IMR-90 (cell line): ENCODE measurements at regions of chr22 and their contacts with region 1.

Region 1: GRCh38 chr22:18070556-18071306 is 7.1 kb upstream of the PEX26 start:
- DNase-seq: no peak
- ATAC-seq: no peak
- H3K4me3 ChIP-seq: no peak overlapping the region
- H3K27ac ChIP-seq: no peak overlapping the region
- H3K4me1 ChIP-seq: peaks cover 4% of the 10 kb centered on the region
- H3K27me3 ChIP-seq: no peaks in the 10 kb centered on the region
- CTCF ChIP-seq: peak; percentile 12; the same call in 1 of the 2 replicates
- POLR2A ChIP-seq: no peak
- RAD21 ChIP-seq: no peak

Region 2: GRCh38 chr22:17684245-17684644 is 386.5 kb before region 1 on chr22:
- CTCF ChIA-PET with region 1: no interaction called
- POLR2A ChIA-PET with region 1: no interaction called
- dilution Hi-C with region 1: no loop called
- in situ Hi-C with region 1: no loop called
- intact Hi-C with region 1: no loop called
- DNase-seq: no peak
- ATAC-seq: no peak
- H3K4me3 ChIP-seq: no peak overlapping the region
- H3K27ac ChIP-seq: no peak overlapping the region
- H3K4me1 ChIP-seq: no peaks in the 10 kb centered on the region
- H3K27me3 ChIP-seq: no peaks in the 10 kb centered on the region
- CTCF ChIP-seq: no peak
- POLR2A ChIP-seq: no peak
- RAD21 ChIP-seq: no peak

Region 3: DNA sequence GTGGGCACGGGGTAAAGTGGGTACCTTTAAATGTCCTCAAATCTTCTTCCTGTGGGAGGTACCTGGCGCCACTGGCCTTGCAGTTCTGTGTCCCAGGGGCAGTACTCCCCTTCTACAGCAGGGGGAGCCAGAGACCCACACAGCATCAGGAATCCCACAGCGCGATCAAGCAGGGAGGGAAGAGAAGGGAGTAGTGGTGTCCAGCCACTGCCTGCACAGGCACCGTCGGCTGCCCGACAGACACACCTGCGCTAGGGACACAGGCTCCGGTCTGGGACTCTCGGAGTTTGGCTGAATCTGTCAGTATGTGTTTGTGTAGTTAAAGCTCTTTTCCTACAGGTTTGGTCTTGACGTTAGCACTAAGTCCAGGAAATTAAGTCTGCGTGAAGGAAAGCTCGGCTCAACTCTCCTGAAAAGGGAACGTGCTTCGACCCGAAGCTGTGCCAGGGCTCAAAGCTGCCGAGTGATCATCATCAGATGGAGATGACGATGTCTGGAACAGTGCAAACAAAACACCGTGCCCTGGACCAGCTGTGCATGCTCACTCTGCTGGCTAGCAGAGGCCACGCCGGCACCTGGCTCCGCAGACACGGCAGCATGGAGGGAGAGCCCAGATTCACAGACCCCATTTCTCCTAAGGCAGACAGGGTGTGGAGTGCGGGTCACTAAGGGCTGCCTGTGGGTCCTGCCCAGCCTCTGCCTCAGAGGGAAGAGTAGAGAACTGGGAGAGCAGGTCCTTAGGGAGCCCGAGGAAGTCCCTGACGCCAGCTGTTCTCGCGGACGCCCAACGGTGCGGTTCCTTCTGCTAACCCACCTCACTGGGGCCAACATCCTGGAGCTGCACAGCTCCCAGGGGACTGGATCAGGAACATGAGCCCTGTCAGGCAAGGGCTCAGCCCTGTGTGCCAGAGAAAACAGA is 240.4 kb before region 1 on chr22:
- CTCF ChIA-PET with region 1: interaction called, 22 read pairs
- POLR2A ChIA-PET with region 1: no interaction called
- dilution Hi-C with region 1: no loop called
- in situ Hi-C with region 1: loop called (anchors 5 kb)
- intact Hi-C with region 1: no loop called
- DNase-seq: peak; percentile 75
- ATAC-seq: peak; percentile 100
- H3K4me3 ChIP-seq: no peak overlapping the region
- H3K27ac ChIP-seq: no peak overlapping the region
- H3K4me1 ChIP-seq: no peaks in the 10 kb centered on the region
- H3K27me3 ChIP-seq: no peaks in the 10 kb centered on the region
- CTCF ChIP-seq: peak; percentile 98
- POLR2A ChIP-seq: no peak; the same call in 1 of the 2 replicates
- RAD21 ChIP-seq: peak; percentile 98

Region 4: GRCh38 chr22:17903564-17904295 is 167.0 kb before region 1 on chr22:
- CTCF ChIA-PET with region 1: interaction called, 5 read pairs
- POLR2A ChIA-PET with region 1: no interaction called
- dilution Hi-C with region 1: no loop called
- in situ Hi-C with region 1: loop called (anchors 5 kb)
- intact Hi-C with region 1: no loop called
- DNase-seq: no peak
- ATAC-seq: 0 out of 2 replicates have a peak, but pooled peaks have one; percentile 11
- H3K4me3 ChIP-seq: no peak overlapping the region
- H3K27ac ChIP-seq: no peak overlapping the region
- H3K4me1 ChIP-seq: peaks cover 2% of the 10 kb centered on the region; the same call in 1 of the 2 replicates
- H3K27me3 ChIP-seq: no peaks in the 10 kb centered on the region
- CTCF ChIP-seq: no peak
- POLR2A ChIP-seq: no peak
- RAD21 ChIP-seq: no peak

Region 5: GRCh38 chr22:17994424-17995108 is 76.2 kb before region 1 on chr22:
- CTCF ChIA-PET with region 1: interaction called, 14 read pairs
- POLR2A ChIA-PET with region 1: no interaction called
- dilution Hi-C with region 1: no loop called
- in situ Hi-C with region 1: loop called (anchors 5 kb)
- intact Hi-C with region 1: no loop called
- DNase-seq: no peak
- ATAC-seq: no peak
- H3K4me3 ChIP-seq: no peak overlapping the region
- H3K27ac ChIP-seq: no peak overlapping the region
- H3K4me1 ChIP-seq: peaks cover 9% of the 10 kb centered on the region
- H3K27me3 ChIP-seq: no peaks in the 10 kb centered on the region
- CTCF ChIP-seq: no peak
- POLR2A ChIP-seq: no peak
- RAD21 ChIP-seq: no peak

Region 6: GRCh38 chr22:18050065-18050464 is 20.7 kb before region 1 on chr22:
- CTCF ChIA-PET with region 1: no interaction called
- POLR2A ChIA-PET with region 1: no interaction called
- dilution Hi-C with region 1: no loop called
- in situ Hi-C with region 1: no loop called
- intact Hi-C with region 1: no loop called
- DNase-seq: no peak
- ATAC-seq: no peak
- H3K4me3 ChIP-seq: no peak overlapping the region
- H3K27ac ChIP-seq: no peak overlapping the region
- H3K4me1 ChIP-seq: 0 out of 2 replicates have a peak, but pooled peaks cover 2% of the 10 kb centered on the region
- H3K27me3 ChIP-seq: no peaks in the 10 kb centered on the region
- CTCF ChIP-seq: no peak
- POLR2A ChIP-seq: no peak
- RAD21 ChIP-seq: no peak

Region 7: GRCh38 chr22:18148293-18148965 is 77.7 kb after region 1 on chr22:
- CTCF ChIA-PET with region 1: no interaction called
- POLR2A ChIA-PET with region 1: no interaction called
- dilution Hi-C with region 1: no loop called
- in situ Hi-C with region 1: no loop called
- intact Hi-C with region 1: no loop called
- DNase-seq: no peak
- ATAC-seq: no peak
- H3K4me3 ChIP-seq: no peak overlapping the region
- H3K27ac ChIP-seq: no peak overlapping the region
- H3K4me1 ChIP-seq: peaks cover 3% of the 10 kb centered on the region; the same call in 1 of the 2 replicates
- H3K27me3 ChIP-seq: no peaks in the 10 kb centered on the region
- CTCF ChIP-seq: no peak
- POLR2A ChIP-seq: no peak
- RAD21 ChIP-seq: no peak